ENCODE measurements at regions of chr11 and their contacts with region 1.

Region 1: GRCh38 chr11:57644748-57645688 is 4.7 kb downstream of the YPEL4 start:
- DNase-seq: peak in 1 of 2 experiments; percentile 93
- H3K4me3 ChIP-seq: no peak overlapping the region; a peak in 1 of 8 replicates
- H3K27ac ChIP-seq: no peak overlapping the region
- H3K4me1 ChIP-seq: peaks cover 34 to 65% (median 44%) of the 10 kb centered on the region in 4 experiments
- H3K27me3 ChIP-seq: no peaks in the 10 kb centered on the region
- CTCF ChIP-seq: peak; percentile 79 to 89 (median 85)
- EP300 ChIP-seq: no peak
- POLR2A ChIP-seq: peak; percentile 28 to 72
- RAD21 ChIP-seq: peak; percentile 81 to 92

Region 2: GRCh38 chr11:57456960-57457642 is 187.9 kb before region 1 on chr11:
- CTCF ChIA-PET with region 1: interaction called, 8 read pairs
- POLR2A ChIA-PET with region 1: interaction called, 33 read pairs
- DNase-seq: peak in 1 of 2 experiments; percentile 97
- H3K4me3 ChIP-seq: peak overlapping the region; percentile 62 to 97 (median 74); a peak in 7 of 8 replicates
- H3K27ac ChIP-seq: no peak overlapping the region
- H3K4me1 ChIP-seq: peaks cover 0 to 20% (median 11%) of the 10 kb centered on the region in 4 experiments; a peak in 6 of 7 replicates
- H3K27me3 ChIP-seq: peaks cover 8 to 30% (median 23%) of the 10 kb centered on the region in 4 experiments
- CTCF ChIP-seq: peak; percentile 92 to 97 (median 95)
- EP300 ChIP-seq: peak in 1 of 2 experiments; percentile 60; a peak in 1 of 3 replicates
- POLR2A ChIP-seq: no peak
- RAD21 ChIP-seq: peak; percentile 89 to 93

Region 3: GRCh38 chr11:57515332-57516060 is 129.5 kb before region 1 on chr11 and contains the start of gene SLC43A1:
- CTCF ChIA-PET with region 1: interaction called, 8 read pairs
- POLR2A ChIA-PET with region 1: interaction called, 77 read pairs
- DNase-seq: peak in 1 of 2 experiments; percentile 66
- H3K4me3 ChIP-seq: peak within 1 kb of the TSS; percentile 49 to 76 (median 68)
- H3K27ac ChIP-seq: no peak within 1 kb of the TSS
- H3K4me1 ChIP-seq: peaks cover 3 to 10% (median 5%) of the 10 kb centered on the region in 4 experiments
- H3K27me3 ChIP-seq: peaks cover 0 to 21% (median 10%) of the 10 kb centered on the region in 4 experiments; a peak in 4 of 7 replicates
- CTCF ChIP-seq: no peak
- EP300 ChIP-seq: no peak
- POLR2A ChIP-seq: no peak; a peak in 1 of 3 replicates
- RAD21 ChIP-seq: 0 out of 4 replicates have a peak, but pooled peaks of 1 of the 2 experiments have one; percentile 0
- total RNA-seq, gene SLC43A1: 30.1 and 34.5 TPM in 2 replicates

Region 4: DNA sequence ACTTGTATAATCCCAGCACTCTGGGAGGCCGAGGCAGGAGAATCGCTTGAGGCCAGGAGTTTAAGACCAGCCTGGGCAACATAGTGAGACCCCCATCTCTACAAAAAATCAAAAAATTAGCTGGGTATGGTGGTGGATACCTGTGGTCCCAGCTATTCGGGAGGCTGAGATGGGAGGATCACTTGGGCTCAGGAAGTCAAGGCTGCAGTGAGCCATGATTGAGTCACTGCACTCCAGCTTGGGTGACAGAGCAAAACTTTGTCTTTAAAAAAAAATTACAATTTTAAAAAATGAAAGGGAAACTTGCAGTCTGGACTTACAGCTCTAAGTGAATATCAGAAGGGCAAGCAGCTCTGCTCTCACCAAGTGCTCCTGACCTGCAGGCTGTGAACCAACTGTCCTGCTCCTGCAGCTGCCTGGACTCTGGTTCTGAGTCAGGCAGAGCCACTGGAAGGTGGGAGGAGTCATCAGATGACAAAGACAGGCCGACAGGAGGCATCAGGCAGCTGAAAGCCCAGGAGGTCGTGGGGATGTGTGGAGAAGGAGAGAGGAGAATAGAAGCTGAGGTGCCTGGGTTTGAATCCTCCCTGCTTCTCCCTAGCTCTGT is 98.0 kb before region 1 on chr11:
- CTCF ChIA-PET with region 1: interaction called, 28 read pairs
- POLR2A ChIA-PET with region 1: interaction called, 47 read pairs
- DNase-seq: no peak
- H3K4me3 ChIP-seq: no peak overlapping the region
- H3K27ac ChIP-seq: no peak overlapping the region
- H3K4me1 ChIP-seq: peaks cover 0 to 15% (median 11%) of the 10 kb centered on the region in 4 experiments; a peak in 6 of 7 replicates
- H3K27me3 ChIP-seq: no peaks in the 10 kb centered on the region; a peak in 2 of 7 replicates
- CTCF ChIP-seq: peak in 2 of 3 experiments; percentile 19 to 21; a peak in 2 of 4 replicates
- EP300 ChIP-seq: no peak
- POLR2A ChIP-seq: no peak
- RAD21 ChIP-seq: peak; percentile 1 to 17; a peak in 1 of 4 replicates

Region 5: DNA sequence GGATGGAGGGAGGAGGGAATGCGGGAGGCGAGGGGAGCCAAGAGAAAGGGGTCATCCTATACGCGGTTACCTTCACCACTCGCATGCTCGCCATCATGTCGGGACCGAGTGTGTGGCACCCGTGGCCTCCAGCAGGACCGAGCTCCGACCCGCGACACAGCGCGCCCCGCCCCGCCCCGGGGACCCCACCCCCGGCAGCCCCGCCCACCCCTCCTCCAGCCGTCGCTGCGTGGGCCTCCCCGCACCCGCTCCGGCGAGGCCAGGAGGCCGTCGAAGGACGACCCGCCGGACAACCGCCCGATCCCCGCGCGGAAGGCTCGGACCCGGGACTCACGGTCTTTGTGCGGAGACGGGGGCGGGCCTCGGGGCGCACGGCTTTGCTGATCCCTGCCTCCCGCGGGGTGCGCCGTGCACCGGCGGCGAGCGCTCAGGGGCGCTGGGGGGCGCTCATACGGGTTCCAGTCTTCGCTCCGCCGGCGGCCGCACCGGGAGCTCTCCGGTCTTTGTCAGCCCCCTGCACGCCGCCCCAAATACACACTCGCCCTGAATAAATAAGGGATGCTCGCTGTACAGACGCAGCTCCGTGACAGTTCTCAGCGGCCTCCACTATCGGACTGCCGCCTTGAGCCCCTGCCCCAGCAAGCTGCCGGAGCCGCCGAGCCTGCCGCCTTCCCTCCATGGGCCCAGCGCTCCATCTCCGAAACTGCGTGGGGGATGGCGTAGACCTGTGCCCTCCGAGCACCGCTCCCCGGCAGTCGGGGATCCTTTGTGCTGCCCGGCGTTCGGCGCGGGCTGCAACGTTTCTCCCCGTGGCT is 77.3 kb before region 1 on chr11 and contains the start of gene UBE2L6:
- CTCF ChIA-PET with region 1: interaction called, 357 read pairs
- POLR2A ChIA-PET with region 1: interaction called, 591 read pairs
- DNase-seq: peak in 1 of 2 experiments; percentile 80
- H3K4me3 ChIP-seq: peak within 1 kb of the TSS; percentile 41 to 89 (median 83)
- H3K27ac ChIP-seq: peak within 1 kb of the TSS; percentile 78; the same call in 1 of the 2 replicates
- H3K4me1 ChIP-seq: peaks cover 0 to 11% (median 4%) of the 10 kb centered on the region in 4 experiments; a peak in 6 of 7 replicates
- H3K27me3 ChIP-seq: no peaks in the 10 kb centered on the region
- CTCF ChIP-seq: peak in 2 of 3 experiments; percentile 48 to 50; a peak in 3 of 4 replicates
- EP300 ChIP-seq: no peak
- POLR2A ChIP-seq: peak; percentile 65 to 81
- RAD21 ChIP-seq: peak in 1 of 2 experiments; percentile 26; a peak in 2 of 4 replicates
- total RNA-seq, gene UBE2L6: 67.8 and 68.1 TPM in 2 replicates

Region 6: GRCh38 chr11:57619331-57619730 is 25.7 kb before region 1 on chr11:
- CTCF ChIA-PET with region 1: interaction called, 129 read pairs
- POLR2A ChIA-PET with region 1: interaction called, 1,546 read pairs
- DNase-seq: no peak
- H3K4me3 ChIP-seq: no peak overlapping the region
- H3K27ac ChIP-seq: no peak overlapping the region
- H3K4me1 ChIP-seq: no peaks in the 10 kb centered on the region
- H3K27me3 ChIP-seq: no peaks in the 10 kb centered on the region
- CTCF ChIP-seq: peak in 2 of 3 experiments; percentile 52 to 72; a peak in 3 of 4 replicates
- EP300 ChIP-seq: no peak
- POLR2A ChIP-seq: no peak
- RAD21 ChIP-seq: peak; percentile 38 to 61

Region 7: DNA sequence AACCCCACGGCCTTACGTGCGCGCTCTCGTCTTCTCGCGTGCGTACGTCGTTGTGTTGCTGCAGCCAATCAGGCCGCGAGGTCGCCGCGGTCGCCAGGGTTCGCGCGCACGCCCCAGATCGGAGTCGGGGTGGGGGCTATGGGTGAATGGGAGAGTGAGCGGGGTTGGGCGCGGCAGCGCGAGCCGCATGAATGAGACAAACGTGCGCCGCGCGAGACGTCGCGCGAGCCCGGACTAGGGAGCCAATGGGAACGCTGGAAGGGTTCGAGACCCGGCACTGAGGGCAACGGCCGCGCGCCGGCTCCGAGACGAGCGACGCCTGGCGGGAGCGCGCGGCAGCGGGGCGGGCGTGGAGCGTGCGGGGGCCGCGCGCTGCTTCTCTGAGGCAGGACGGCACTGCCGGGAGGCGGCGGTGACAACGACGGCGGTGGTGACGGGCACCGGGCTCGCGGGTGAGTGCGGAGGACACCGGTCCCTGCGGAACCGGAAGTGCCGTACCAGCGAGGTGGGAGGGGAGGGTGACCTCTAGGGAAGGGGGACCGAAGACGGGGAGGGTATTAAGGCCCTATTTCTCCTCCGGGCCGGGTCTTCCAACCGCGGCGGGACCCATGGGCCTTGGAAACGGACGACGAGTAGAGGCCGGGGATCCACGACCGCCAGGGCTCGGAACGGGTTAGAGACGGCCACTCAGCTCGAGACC is 22.9 kb after region 1 on chr11 and contains the start of gene ZDHHC5:
- CTCF ChIA-PET with region 1: interaction called, 8 read pairs
- POLR2A ChIA-PET with region 1: interaction called, 79 read pairs
- DNase-seq: peak; percentile 97
- H3K4me3 ChIP-seq: peak within 1 kb of the TSS; percentile 90 to 95 (median 94)
- H3K27ac ChIP-seq: peak within 1 kb of the TSS; percentile 99
- H3K4me1 ChIP-seq: peaks cover 0 to 7% (median 2%) of the 10 kb centered on the region in 4 experiments; a peak in 3 of 7 replicates
- H3K27me3 ChIP-seq: no peaks in the 10 kb centered on the region
- CTCF ChIP-seq: peak; percentile 14 to 46 (median 37); a peak in 2 of 4 replicates
- EP300 ChIP-seq: 0 out of 3 replicates have a peak, but pooled peaks of 1 of the 2 experiments have one; percentile 27
- POLR2A ChIP-seq: peak; percentile 20 to 92; a peak in 2 of 3 replicates
- RAD21 ChIP-seq: no peak
- total RNA-seq, gene ZDHHC5: 54.8 and 56.3 TPM in 2 replicates